ENCODE measurements at regions of chr16 and their contacts with region 1.

Region 1: DNA sequence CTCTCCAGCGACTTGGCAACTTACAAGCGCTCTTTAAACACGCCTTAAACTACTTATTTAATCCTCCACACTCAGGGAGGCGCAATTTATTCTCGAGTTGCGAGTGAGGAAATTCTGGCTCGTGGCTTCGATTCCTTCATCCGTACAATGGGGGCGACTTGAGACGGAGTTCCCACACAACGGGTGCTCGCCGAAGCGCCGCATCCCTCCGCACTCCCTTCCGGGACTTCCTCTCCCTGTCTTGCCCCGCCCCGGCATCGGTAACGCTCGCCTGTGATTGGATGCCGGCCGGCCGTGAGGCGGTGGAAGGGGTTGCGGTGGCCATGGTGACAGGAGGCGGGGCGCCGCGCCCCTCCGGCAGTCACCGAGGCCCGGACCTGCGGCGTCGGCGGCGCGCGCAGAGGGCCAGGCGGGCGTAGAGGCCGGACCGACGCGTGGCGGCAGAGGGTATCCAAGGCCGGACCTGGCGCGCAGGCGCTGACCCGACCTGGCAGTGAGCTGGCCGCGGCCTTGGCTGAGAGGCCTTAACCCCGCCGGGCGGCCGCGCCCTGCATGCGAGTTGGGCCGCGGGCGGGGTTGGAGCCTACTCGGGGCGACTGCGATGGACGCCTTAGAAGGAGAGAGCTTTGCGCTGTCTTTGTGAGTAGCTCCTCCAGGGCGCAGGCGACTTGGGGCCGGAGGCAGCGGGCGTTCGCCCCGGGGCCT is at the start of gene ARL2BP:
- DNase-seq: peak in 1 of 2 donors; percentile 99
- H3K4me3 ChIP-seq: peak within 1 kb of the TSS; percentile 71 to 90
- H3K27ac ChIP-seq: peak within 1 kb of the TSS; percentile 87
- H3K4me1 ChIP-seq: peaks cover 12% of the 10 kb centered on the region
- H3K27me3 ChIP-seq: no peaks in the 10 kb centered on the region
- CTCF ChIP-seq: no peak
- POLR2A ChIP-seq: peak in 1 of 2 donors; percentile 63
- total RNA-seq, gene ARL2BP: 44.7 TPM

Region 2: DNA sequence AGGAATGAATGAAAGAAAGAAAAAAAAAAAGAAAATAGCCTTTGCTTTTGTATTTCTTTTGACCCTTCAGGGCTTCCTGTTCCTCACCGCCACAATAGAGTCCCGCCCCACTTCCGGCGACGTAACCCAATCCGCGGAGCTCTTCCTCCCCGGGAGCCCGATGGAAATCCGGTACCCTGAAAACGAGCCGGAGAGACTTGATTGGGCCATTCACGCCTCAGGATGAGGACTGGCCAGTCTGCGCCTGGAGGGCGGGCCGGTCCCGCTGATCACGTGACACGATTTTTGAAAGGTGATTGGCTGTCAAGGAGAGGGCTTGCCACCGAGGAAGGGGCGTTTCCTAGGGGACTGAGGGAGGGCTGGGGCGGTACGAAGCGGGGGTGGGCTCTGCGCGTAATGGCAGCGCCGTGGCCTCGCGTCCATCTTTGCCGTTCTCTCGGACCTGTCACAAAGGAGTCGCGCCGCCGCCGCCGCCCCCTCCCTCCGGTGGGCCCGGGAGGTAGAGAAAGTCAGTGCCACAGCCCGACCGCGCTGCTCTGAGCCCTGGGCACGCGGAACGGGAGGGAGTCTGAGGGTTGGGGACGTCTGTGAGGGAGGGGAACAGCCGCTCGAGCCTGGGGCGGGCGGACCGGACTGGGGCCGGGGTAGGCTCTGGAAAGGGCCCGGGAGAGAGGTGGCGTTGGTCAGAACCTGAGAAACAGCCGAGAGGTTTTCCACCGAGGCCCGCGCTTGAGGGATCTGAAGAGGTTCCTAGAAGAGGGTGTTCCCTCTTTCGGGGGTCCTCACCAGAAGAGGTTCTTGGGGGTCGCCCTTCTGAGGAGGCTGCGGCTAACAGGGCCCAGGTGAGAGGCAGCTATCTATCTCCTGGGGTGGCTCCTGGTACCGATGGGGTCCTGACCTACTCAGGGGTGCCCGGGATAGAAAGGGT is 58.7 kb before region 1 on chr16 and contains the starts of genes PSME3IP1 and RSPRY1:
- intact Hi-C with region 1: loop called (anchors 10 kb)
- DNase-seq: peak; percentile 100
- H3K4me3 ChIP-seq: peak within 1 kb of the TSS; percentile 98 to 99
- H3K27ac ChIP-seq: peak within 1 kb of the TSS; percentile 91
- H3K4me1 ChIP-seq: peaks cover 42% of the 10 kb centered on the region
- H3K27me3 ChIP-seq: no peaks in the 10 kb centered on the region
- CTCF ChIP-seq: no peak
- POLR2A ChIP-seq: peak in 1 of 2 donors; percentile 75
- total RNA-seq, gene PSME3IP1: 70.5 TPM
- total RNA-seq, gene RSPRY1: 37.6 TPM

Measured in vagina (tissue), 2 donors.